Activated T-helper 1 cell treated with anti-CD3 and anti-CD28 coated beads, Interleukin-12 subunit alpha, Interleukin-12 subunit beta, Interleukin-2, Interleukin-4 antibody, amounts not matched to agents 30 ng/mL and 10 ng/mL and 1 ng/mL, durations not matched to agents 14 hours and 24 hours and 36 hours (primary cell): ENCODE measurements at regions of chr7 and their contacts with region 1.

Region 1: DNA sequence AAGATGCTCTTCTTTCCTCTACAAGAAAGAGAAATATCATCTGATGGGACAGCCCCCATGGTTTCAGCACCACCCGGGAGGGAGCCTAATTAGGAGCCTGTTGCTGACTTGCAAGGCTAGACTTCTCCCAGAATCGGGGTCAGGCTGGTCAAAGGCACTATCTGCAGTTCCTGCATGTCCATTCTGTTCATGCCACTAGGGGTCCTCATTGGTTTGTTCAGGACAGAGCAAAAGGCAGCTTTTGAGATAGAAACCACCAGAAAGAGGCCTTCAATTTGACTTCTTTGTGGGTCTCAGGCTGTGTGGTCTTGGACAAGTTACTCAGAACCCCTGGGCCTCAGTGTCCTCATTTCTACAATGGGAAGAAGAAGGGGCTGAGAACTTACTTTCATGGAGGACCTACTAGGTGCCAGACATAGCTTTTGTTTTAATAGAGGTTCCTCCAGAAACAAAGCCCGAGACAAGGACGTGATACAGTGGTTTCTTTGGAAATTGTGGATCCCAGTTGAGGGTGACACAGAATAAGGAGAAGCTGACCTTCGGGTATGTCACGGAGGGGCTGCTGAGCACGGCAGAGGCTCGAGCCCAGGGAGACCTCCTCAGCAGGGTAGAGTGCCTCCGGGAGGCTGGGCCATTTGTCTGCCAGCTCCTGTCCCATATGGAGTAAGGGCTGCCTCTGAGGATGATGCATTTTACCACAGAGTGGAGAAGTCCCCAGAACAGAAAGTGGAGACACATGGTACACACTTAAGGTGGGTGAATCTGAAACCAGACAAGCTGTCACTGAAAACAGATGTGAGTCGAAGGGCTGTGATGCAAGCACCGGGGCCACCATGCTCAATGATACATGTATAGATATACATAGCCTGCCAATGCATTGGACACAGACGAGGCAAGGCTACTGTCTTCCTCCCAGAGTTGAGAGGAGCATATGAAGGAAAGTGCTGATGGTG is 33.1 kb upstream of the NEUROD6 start:
- DNase-seq: no peak
- H3K4me3 Mint-ChIP-seq: no peak overlapping the region
- H3K27ac Mint-ChIP-seq: no peak overlapping the region
- H3K4me1 Mint-ChIP-seq: no peaks in the 10 kb centered on the region
- H3K27me3 Mint-ChIP-seq: no peaks in the 10 kb centered on the region

Region 2: GRCh38 chr7:33287748-33288147 is 1914.1 kb after region 1 on chr7:
- intact Hi-C with region 1: loop called (anchors 5 kb)
- DNase-seq: no peak
- H3K4me3 Mint-ChIP-seq: no peak overlapping the region
- H3K27ac Mint-ChIP-seq: no peak overlapping the region
- H3K4me1 Mint-ChIP-seq: no peaks in the 10 kb centered on the region
- H3K27me3 Mint-ChIP-seq: no peaks in the 10 kb centered on the region